Activated CD8-positive, alpha-beta memory T cell treated with anti-CD3 and anti-CD28 coated beads, Interleukin-2, amount 10 ng/mL, durations not matched to agents 7 days and 5 days (primary cell): ENCODE measurements at regions of chr5 and their contacts with region 1.

Region 1: GRCh38 chr5:132293066-132293991 is 865 bp upstream of the SLC22A4 start:
- DNase-seq: peak; percentile 77
- ATAC-seq: peak; percentile 53
- H3K4me3 Mint-ChIP-seq: peak overlapping the region; percentile 83
- H3K27ac Mint-ChIP-seq: peak overlapping the region; percentile 80
- H3K4me1 Mint-ChIP-seq: peaks cover 21% of the 10 kb centered on the region
- H3K27me3 Mint-ChIP-seq: no peaks in the 10 kb centered on the region

Region 2: DNA sequence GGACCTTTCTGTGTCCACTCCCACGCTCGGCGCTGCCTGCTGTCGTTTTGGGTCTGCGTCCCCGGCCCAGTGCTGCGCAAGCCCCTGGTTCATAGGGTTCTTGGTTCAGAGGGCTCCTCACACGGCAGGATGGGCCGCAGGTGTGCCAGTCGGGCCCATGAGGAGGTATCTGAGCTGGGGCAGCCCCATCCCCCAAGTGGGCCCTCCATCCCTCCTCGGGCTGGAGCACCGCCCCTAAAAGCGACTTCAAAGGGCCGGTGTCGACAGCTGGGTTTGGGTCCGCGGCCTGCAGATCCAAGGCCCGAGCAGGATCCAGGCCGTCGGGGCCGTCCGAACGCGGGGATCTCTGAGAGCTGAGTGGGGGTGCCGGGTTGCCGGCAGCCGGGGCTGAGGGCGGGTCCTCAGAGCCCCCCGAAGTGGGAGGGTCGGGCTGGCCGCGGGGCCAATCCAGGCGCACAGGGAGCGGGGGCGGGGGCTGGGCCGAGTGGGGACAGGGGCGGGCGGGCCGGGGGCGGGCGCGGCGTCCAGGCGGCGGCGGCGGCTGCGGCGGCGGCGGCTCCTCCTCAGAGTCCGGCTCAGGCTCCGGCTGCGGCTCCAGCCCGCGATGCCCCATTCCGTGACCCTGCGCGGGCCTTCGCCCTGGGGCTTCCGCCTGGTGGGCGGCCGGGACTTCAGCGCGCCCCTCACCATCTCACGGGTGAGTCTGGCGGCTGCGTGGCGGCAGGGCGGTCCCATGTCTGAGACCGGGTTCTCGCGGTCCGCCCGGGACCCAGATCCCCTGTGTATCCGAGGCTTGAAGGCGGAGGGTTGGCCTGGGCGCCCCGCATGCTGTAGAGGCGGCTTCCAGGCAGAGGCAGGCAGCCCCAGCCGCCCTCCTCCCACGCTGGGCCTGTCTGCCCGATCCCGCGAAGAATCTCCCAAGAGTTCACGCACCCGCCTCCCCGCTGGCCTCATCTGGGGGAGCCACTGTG is 35.9 kb before region 1 on chr5 and contains the start of gene PDLIM4:
- CTCF ChIA-PET with region 1: no interaction called
- DNase-seq: peak; percentile 36
- ATAC-seq: peak; percentile 28
- H3K4me3 Mint-ChIP-seq: no peak within 1 kb of the TSS
- H3K27ac Mint-ChIP-seq: no peak within 1 kb of the TSS
- H3K4me1 Mint-ChIP-seq: peaks cover 11% of the 10 kb centered on the region
- H3K27me3 Mint-ChIP-seq: peaks cover 16% of the 10 kb centered on the region
- total RNA-seq, gene PDLIM4: 2.3 TPM in 1 of 2 experiments, not detected in the other

Region 3: DNA sequence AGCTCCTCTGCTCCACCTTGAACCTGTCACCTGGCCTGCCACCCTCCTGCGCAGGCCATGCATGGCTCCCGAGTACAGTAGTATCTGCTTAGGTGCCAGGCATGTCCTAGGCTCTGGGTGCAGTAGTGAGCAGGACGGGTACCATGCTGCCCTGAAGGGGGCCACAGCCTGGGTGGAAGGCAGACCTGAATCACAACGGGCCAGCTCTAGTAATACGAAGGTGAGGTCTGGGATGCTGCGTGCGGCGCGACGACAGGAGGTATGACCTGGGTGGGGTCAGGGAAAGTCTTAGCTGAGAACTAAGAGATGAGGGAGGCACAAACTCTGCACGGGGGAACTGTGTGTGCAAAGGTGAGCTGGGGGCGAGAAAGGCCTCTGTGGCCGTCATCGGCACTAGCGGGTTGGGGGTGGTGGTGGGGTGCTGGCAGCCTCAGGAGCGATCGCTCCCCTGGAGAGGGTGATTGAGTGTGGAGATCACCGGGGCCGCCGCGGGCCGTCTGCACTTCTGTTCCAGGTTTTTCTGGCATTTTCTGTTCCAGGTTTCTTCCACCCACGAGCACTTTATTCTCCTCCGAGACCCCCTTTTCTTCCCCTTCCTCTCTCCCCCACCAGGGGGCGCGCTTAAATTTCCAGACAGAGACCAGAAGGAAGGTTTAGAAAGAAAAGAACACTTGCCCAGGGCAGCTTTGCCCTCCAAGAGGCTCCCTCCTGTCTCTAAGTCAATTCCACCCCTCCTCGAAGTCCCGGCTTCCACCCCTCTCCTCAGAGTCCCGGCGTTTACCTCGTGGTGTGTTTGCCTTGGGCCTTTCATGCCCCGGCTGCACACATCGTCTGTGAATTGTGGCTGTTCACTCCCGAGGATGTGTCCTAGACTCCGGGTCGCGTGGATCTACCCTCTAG is 20.8 kb before region 1 on chr5:
- CTCF ChIA-PET with region 1: interaction called, 12 read pairs
- DNase-seq: peak; percentile 70
- ATAC-seq: peak; percentile 45
- H3K4me3 Mint-ChIP-seq: no peak overlapping the region
- H3K27ac Mint-ChIP-seq: no peak overlapping the region
- H3K4me1 Mint-ChIP-seq: peaks cover 5% of the 10 kb centered on the region
- H3K27me3 Mint-ChIP-seq: peaks cover 8% of the 10 kb centered on the region

Region 4: DNA sequence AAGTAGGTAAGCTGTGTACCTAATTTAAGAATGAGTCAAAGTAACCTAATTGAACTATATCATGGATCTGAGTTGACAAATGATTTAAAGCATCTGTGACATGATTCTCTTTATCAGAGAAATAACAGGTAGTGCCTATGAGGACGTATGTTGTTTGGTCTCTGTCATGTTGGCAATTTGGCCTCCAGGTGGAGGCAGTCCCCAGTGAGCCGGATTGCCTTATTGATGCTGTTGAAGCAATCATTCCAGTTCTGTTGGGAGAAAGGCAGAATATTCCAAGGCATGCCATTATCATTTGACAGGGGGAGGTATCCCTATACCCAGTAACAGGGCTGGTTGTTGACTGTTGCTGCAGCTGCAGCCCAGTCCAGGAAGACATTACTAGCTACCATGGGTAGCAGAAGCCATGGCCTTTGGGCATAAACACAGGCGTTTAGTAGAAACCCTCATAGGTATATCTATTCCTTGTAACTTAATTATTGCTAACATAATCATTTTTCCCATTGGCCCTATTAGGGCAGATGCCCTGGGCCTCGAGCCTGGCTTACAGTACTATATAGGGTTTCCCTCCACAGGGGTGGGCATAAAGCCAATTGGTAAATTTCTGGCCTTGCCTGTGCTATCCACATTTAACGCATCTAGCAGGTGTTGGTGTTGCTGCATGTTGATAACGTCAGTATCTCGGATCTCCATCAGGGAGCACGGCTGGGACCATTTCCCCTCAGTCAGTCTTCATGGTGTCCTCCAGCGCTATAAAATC is 11.3 kb before region 1 on chr5:
- CTCF ChIA-PET with region 1: interaction called, 11 read pairs
- DNase-seq: peak; percentile 31
- ATAC-seq: no peak
- H3K4me3 Mint-ChIP-seq: no peak overlapping the region
- H3K27ac Mint-ChIP-seq: no peak overlapping the region
- H3K4me1 Mint-ChIP-seq: no peaks in the 10 kb centered on the region
- H3K27me3 Mint-ChIP-seq: peaks cover 10% of the 10 kb centered on the region

Region 5: DNA sequence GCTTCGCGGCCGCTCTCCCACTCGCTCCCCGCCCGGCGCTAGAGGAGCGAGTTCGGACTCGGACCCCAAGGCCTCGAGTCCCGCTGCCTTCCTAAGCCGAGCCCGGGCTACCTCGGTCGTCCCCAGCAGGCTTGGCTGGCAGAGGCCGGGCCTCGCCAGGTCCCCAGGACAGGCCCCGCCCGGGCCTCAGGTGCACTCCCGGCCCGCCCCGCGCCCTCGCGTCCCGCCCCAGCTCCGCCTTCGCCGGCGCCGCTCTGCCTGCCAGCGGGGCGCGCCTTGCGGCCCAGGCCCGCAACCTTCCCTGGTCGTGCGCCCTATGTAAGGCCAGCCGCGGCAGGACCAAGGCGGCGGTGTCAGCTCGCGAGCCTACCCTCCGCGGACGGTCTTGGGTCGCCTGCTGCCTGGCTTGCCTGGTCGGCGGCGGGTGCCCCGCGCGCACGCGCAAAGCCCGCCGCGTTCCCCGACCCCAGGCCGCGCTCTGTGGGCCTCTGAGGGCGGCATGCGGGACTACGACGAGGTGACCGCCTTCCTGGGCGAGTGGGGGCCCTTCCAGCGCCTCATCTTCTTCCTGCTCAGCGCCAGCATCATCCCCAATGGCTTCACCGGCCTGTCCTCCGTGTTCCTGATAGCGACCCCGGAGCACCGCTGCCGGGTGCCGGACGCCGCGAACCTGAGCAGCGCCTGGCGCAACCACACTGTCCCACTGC is 76.3 kb after region 1 on chr5 and contains the start of gene SLC22A5:
- CTCF ChIA-PET with region 1: no interaction called
- DNase-seq: peak; percentile 73
- ATAC-seq: peak; percentile 97
- H3K4me3 Mint-ChIP-seq: peak within 1 kb of the TSS; percentile 75
- H3K27ac Mint-ChIP-seq: peak within 1 kb of the TSS; percentile 52
- H3K4me1 Mint-ChIP-seq: peaks cover 20% of the 10 kb centered on the region
- H3K27me3 Mint-ChIP-seq: no peaks in the 10 kb centered on the region
- total RNA-seq, gene SLC22A5: 3.9 to 4.5 TPM

Region 6: GRCh38 chr5:132639706-132640130 is 346.4 kb after region 1 on chr5:
- CTCF ChIA-PET with region 1: no interaction called
- DNase-seq: peak; percentile 81
- ATAC-seq: peak; percentile 54
- H3K4me3 Mint-ChIP-seq: peak overlapping the region; percentile 16
- H3K27ac Mint-ChIP-seq: peak overlapping the region; percentile 86
- H3K4me1 Mint-ChIP-seq: peaks cover 89% of the 10 kb centered on the region
- H3K27me3 Mint-ChIP-seq: no peaks in the 10 kb centered on the region